Heart right ventricle (tissue), 16 donors: ENCODE measurements at regions of chr4 and their contacts with region 1.

Region 1: DNA sequence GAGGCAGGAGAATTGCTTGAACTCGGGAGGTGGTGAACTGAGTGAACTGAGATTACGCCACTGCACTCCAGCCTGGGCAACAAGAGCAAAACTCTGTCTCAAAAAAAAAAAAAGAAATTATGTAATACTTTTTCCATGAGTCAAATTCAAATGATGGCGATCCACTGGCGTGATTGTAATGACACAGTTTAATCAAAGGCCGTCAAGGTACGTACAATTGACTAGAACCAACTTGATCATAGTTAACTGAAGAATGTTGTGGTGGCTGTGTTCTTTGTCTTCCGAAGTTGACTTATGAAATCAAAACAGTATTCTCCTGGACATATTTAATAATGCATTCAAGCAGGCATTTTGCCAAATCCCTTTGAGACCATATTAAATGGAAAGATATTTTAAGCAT is 318.6 kb upstream of the FAT1 start:
- DNase-seq: no peak
- ATAC-seq: no peak
- H3K4me3 ChIP-seq: no peak overlapping the region
- H3K27ac ChIP-seq: no peak overlapping the region
- H3K4me1 ChIP-seq: no peaks in the 10 kb centered on the region
- H3K27me3 ChIP-seq: no peaks in the 10 kb centered on the region
- CTCF ChIP-seq: no peak

Region 2: GRCh38 chr4:186898367-186898766 is 143.9 kb before region 1 on chr4:
- intact Hi-C with region 1: loop called in 1 of 10 experiments (anchors 5 kb)
- DNase-seq: no peak
- ATAC-seq: no peak
- H3K4me3 ChIP-seq: no peak overlapping the region
- H3K27ac ChIP-seq: no peak overlapping the region
- H3K4me1 ChIP-seq: peaks cover 0 to 10% (median 0%) of the 10 kb centered on the region in 9 donors
- H3K27me3 ChIP-seq: no peaks in the 10 kb centered on the region
- CTCF ChIP-seq: no peak

Region 3: GRCh38 chr4:187444061-187444460 is 401.8 kb after region 1 on chr4:
- intact Hi-C with region 1: no loop called
- DNase-seq: no peak
- ATAC-seq: no peak
- H3K4me3 ChIP-seq: no peak overlapping the region
- H3K27ac ChIP-seq: no peak overlapping the region
- H3K4me1 ChIP-seq: no peaks in the 10 kb centered on the region
- H3K27me3 ChIP-seq: no peaks in the 10 kb centered on the region
- CTCF ChIP-seq: no peak